ENCODE measurements at regions of chr12 and their contacts with region 1.

Region 1: DNA sequence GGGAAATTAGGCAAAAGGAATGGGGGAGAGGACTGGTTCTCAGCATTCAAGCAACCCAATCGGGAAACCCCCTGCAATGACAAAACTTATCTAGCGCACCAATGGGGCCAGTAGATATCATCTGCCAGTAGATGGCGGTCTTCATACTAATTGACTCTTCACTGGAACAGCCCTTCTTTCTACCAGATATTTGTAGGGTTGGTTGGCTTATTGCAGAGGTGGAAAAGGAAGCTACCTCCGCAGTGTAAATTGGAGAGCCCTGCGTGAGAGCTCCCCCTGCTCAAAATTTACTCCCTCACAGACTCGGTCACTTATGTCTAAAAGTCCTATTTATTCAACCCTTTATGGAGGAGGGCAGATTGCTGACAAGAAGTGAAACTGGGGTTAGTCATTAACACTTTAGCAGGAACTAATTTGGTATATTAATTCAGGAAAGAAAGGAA is 166.1 kb upstream of the CCND2 start:
- DNase-seq: peak; percentile 33
- ATAC-seq: peak; percentile 98
- H3K4me3 Mint-ChIP-seq: peak overlapping the region; percentile 45
- H3K27ac Mint-ChIP-seq: peak overlapping the region; percentile 64
- H3K4me1 Mint-ChIP-seq: peaks cover 19% of the 10 kb centered on the region
- H3K27me3 Mint-ChIP-seq: peaks cover 5% of the 10 kb centered on the region
- CTCF ChIP-seq: peak; percentile 34

Region 2: DNA sequence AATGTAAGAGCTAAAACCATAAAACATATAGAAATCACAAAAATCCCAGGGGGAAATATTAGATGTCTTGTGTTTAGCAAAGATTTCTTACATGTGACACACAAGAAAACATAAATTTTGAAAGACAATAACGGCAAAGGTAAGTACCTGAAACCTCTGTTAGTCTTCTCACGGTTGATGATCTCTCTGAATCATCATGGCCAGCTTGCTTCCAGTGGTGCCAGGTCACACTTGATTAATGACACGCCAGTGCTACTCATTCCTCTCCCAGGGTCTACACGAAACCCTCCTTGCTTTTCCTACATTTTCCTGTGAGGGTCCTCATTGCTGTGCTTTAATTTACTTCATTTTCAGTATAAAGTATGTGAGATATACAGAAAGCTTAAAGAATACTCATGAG is 119.9 kb before region 1 on chr12:
- CTCF ChIA-PET with region 1: no interaction called
- POLR2A ChIA-PET with region 1: no interaction called
- intact Hi-C with region 1: no loop called
- DNase-seq: no peak
- ATAC-seq: no peak
- H3K4me3 Mint-ChIP-seq: no peak overlapping the region
- H3K27ac Mint-ChIP-seq: no peak overlapping the region
- H3K4me1 Mint-ChIP-seq: peaks cover 15% of the 10 kb centered on the region
- H3K27me3 Mint-ChIP-seq: no peaks in the 10 kb centered on the region
- CTCF ChIP-seq: no peak

Region 3: DNA sequence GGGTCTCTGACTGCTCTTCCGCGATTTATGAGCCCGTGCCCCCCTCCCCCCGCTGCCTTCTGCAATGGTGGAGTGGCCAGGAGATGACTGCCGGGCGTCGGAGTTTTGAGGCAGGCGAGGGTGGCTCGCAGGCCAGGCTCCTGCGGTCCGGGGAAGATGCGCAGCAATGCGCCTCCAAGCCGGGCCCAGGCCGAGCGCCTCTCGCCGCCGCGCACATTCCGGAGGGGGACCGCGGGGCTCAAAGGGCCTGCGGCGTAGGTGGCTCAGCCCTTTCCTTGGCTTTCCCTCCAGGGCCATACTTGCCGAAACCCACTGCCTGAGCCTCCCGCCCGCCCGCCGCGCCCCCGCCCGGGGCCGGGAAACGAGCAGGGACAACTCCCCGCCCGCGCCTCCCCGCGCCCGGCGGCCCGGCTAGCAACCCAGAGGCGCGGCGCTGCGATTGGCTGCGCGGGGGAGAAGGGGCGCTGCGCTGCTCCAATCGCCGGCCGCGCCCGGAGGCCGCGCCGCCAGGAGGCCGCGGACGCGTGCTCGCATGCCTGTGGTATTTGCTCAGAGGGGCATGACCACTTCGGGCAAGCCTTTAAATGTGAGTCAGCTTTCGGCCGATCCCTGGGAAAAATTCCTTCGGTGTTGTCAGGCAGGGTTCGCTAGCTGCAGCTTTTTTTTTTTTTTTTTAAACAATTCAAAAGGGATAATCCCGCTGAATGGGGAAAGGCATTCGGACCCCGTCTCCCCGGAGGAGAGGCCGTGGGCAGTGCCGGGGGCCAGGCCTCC is 76.3 kb before region 1 on chr12:
- CTCF ChIA-PET with region 1: no interaction called
- POLR2A ChIA-PET with region 1: no interaction called
- intact Hi-C with region 1: loop called (anchors 2 kb)
- DNase-seq: peak; percentile 68
- ATAC-seq: peak; percentile 98
- H3K4me3 Mint-ChIP-seq: peak overlapping the region; percentile 52
- H3K27ac Mint-ChIP-seq: no peak overlapping the region
- H3K4me1 Mint-ChIP-seq: peaks cover 12% of the 10 kb centered on the region
- H3K27me3 Mint-ChIP-seq: peaks cover 11% of the 10 kb centered on the region
- CTCF ChIP-seq: no peak

Region 4: GRCh38 chr12:4141348-4142270 is 34.2 kb after region 1 on chr12:
- CTCF ChIA-PET with region 1: interaction called, 13 read pairs
- POLR2A ChIA-PET with region 1: interaction called, 13 read pairs
- intact Hi-C with region 1: loop called (anchors 1 kb)
- DNase-seq: no peak
- ATAC-seq: no peak
- H3K4me3 Mint-ChIP-seq: no peak overlapping the region
- H3K27ac Mint-ChIP-seq: peak overlapping the region; percentile 99
- H3K4me1 Mint-ChIP-seq: peaks cover 73% of the 10 kb centered on the region
- H3K27me3 Mint-ChIP-seq: no peaks in the 10 kb centered on the region
- CTCF ChIP-seq: no peak

Region 5: GRCh38 chr12:4203772-4204376 is 96.4 kb after region 1 on chr12:
- CTCF ChIA-PET with region 1: interaction called, 4 read pairs
- POLR2A ChIA-PET with region 1: interaction called, 5 read pairs
- intact Hi-C with region 1: loop called (anchors 1 kb)
- DNase-seq: no peak
- ATAC-seq: peak; percentile 15
- H3K4me3 Mint-ChIP-seq: peak overlapping the region; percentile 1
- H3K27ac Mint-ChIP-seq: peak overlapping the region; percentile 63
- H3K4me1 Mint-ChIP-seq: peaks cover 53% of the 10 kb centered on the region
- H3K27me3 Mint-ChIP-seq: no peaks in the 10 kb centered on the region
- CTCF ChIP-seq: no peak

Region 6: DNA sequence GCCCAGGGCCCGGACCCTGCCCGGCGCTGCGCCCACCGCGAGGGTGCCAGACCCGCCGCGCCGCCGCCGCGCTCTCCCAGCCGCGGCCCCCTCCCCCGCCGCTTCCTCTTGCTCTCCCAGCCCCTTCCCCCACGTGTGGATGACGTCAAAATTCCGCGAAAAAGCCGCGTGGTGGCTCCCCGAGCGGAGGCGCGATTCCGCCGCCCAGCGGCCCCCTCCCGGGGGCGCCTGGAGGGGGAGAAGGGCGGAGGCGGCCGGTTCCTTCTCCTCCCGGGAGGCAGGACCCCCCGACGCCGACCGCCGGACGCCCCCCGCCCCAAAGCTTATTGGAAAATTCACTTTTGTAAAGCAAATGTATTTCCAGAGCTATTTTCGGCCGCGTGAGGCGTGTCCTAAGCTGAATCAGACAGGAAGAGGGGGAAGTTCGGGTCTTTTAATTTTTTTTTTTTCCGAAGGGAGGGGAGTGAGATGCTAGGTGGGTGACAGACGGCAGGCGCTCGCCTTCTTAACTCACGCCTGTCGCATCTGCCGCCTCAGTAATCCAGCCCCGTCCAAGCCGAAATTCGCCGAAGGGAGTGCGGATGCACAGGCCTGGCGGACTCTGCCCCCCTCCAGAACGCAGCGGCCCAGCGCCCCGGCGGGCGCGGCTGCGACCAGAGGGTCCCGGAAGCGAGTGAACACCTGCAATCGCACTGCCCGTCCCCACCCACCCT is 162.0 kb after region 1 on chr12:
- CTCF ChIA-PET with region 1: interaction called, 19 read pairs
- POLR2A ChIA-PET with region 1: interaction called, 72 read pairs
- intact Hi-C with region 1: loop called (anchors 1 kb)
- DNase-seq: peak; percentile 84
- ATAC-seq: peak; percentile 30
- H3K4me3 Mint-ChIP-seq: peak overlapping the region; percentile 91
- H3K27ac Mint-ChIP-seq: peak overlapping the region; percentile 95
- H3K4me1 Mint-ChIP-seq: peaks cover 33% of the 10 kb centered on the region
- H3K27me3 Mint-ChIP-seq: no peaks in the 10 kb centered on the region
- CTCF ChIP-seq: no peak

Measured in activated B cell treated with CpG ODN at 0.5 μM for 24 hours (primary cell).